ENCODE measurements at regions of chr21 and their contacts with region 1.

Region 1: DNA sequence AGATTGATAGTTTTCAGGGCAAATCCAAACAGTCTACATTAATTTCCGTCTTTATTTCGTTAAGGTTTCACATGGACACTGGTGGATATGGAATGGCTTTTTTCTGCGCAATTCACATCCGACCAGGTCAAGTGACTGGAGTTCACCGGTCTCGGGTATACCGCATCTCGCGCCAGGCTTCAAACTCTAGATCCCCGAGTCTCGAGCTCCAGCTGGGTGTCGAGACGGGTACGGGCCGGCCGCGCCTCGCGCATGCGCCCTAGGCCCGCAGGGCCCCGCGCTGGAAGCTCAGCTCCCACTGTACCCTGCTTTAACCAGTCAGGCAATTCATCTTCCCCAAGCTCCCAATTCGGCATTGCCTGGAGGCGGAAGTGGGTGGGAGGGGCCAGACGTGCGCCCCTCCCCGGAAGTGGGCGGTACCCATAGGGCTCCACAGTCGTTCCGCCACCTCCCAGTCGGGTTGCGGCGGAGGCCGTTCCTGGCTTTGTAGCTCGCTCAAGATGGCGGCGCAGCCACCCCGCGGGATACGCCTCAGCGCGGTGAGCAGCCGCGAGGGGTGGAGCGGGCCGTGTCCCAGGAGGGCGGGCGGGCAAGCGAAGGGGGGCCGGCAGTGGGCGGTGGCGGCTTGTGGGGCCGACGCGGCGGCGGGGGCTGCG is at the start of gene MORC3:
- DNase-seq: peak; percentile 98
- H3K4me3 ChIP-seq: peak within 1 kb of the TSS; percentile 51
- H3K4me3 Mint-ChIP-seq: peak within 1 kb of the TSS; percentile 73
- H3K27ac Mint-ChIP-seq: peak within 1 kb of the TSS; percentile 75
- H3K4me1 ChIP-seq: peaks cover 4% of the 10 kb centered on the region; the same call in 1 of the 2 replicates
- H3K4me1 Mint-ChIP-seq: peaks cover 22% of the 10 kb centered on the region
- H3K27me3 ChIP-seq: no peaks in the 10 kb centered on the region
- H3K27me3 Mint-ChIP-seq: no peaks in the 10 kb centered on the region
- CTCF ChIP-seq: no peak
- total RNA-seq, gene MORC3: 21.6 and 23.3 TPM in 2 replicates

Region 2: GRCh38 chr21:36076878-36077655 is 242.8 kb before region 1 on chr21:
- CTCF ChIA-PET with region 1: no interaction called
- POLR2A ChIA-PET with region 1: interaction called, 11 read pairs
- intact Hi-C with region 1: no loop called
- DNase-seq: no peak
- H3K4me3 ChIP-seq: no peak overlapping the region
- H3K4me3 Mint-ChIP-seq: no peak overlapping the region
- H3K27ac Mint-ChIP-seq: no peak overlapping the region
- H3K4me1 ChIP-seq: no peaks in the 10 kb centered on the region
- H3K4me1 Mint-ChIP-seq: peaks cover 16% of the 10 kb centered on the region
- H3K27me3 ChIP-seq: no peaks in the 10 kb centered on the region
- H3K27me3 Mint-ChIP-seq: no peaks in the 10 kb centered on the region
- CTCF ChIP-seq: no peak

Region 3: GRCh38 chr21:36209626-36210171 is 110.2 kb before region 1 on chr21:
- CTCF ChIA-PET with region 1: interaction called, 5 read pairs
- POLR2A ChIA-PET with region 1: interaction called, 14 read pairs
- intact Hi-C with region 1: no loop called
- DNase-seq: peak; percentile 74 to 76
- H3K4me3 ChIP-seq: no peak overlapping the region
- H3K4me3 Mint-ChIP-seq: peak overlapping the region; percentile 32
- H3K27ac Mint-ChIP-seq: peak overlapping the region; percentile 81
- H3K4me1 ChIP-seq: peaks cover 16% of the 10 kb centered on the region
- H3K4me1 Mint-ChIP-seq: peaks cover 25% of the 10 kb centered on the region
- H3K27me3 ChIP-seq: no peaks in the 10 kb centered on the region
- H3K27me3 Mint-ChIP-seq: no peaks in the 10 kb centered on the region
- CTCF ChIP-seq: peak; percentile 74 to 79

Region 4: GRCh38 chr21:36254106-36254941 is 65.6 kb before region 1 on chr21:
- CTCF ChIA-PET with region 1: no interaction called
- POLR2A ChIA-PET with region 1: interaction called, 16 read pairs
- intact Hi-C with region 1: no loop called
- DNase-seq: peak in 1 of 2 experiments; percentile 37
- H3K4me3 ChIP-seq: no peak overlapping the region
- H3K4me3 Mint-ChIP-seq: no peak overlapping the region
- H3K27ac Mint-ChIP-seq: peak overlapping the region; percentile 54
- H3K4me1 ChIP-seq: no peaks in the 10 kb centered on the region
- H3K4me1 Mint-ChIP-seq: peaks cover 25% of the 10 kb centered on the region
- H3K27me3 ChIP-seq: no peaks in the 10 kb centered on the region
- H3K27me3 Mint-ChIP-seq: no peaks in the 10 kb centered on the region
- CTCF ChIP-seq: no peak

Region 5: GRCh38 chr21:36350282-36350910 is 30.5 kb after region 1 on chr21:
- CTCF ChIA-PET with region 1: no interaction called
- POLR2A ChIA-PET with region 1: interaction called, 11 read pairs
- intact Hi-C with region 1: no loop called
- DNase-seq: no peak
- H3K4me3 ChIP-seq: no peak overlapping the region
- H3K4me3 Mint-ChIP-seq: no peak overlapping the region
- H3K27ac Mint-ChIP-seq: no peak overlapping the region
- H3K4me1 ChIP-seq: no peaks in the 10 kb centered on the region
- H3K4me1 Mint-ChIP-seq: peaks cover 7% of the 10 kb centered on the region
- H3K27me3 ChIP-seq: no peaks in the 10 kb centered on the region
- H3K27me3 Mint-ChIP-seq: no peaks in the 10 kb centered on the region
- CTCF ChIP-seq: no peak